ENCODE measurements at regions of chr11 and their contacts with region 1.

Region 1: DNA sequence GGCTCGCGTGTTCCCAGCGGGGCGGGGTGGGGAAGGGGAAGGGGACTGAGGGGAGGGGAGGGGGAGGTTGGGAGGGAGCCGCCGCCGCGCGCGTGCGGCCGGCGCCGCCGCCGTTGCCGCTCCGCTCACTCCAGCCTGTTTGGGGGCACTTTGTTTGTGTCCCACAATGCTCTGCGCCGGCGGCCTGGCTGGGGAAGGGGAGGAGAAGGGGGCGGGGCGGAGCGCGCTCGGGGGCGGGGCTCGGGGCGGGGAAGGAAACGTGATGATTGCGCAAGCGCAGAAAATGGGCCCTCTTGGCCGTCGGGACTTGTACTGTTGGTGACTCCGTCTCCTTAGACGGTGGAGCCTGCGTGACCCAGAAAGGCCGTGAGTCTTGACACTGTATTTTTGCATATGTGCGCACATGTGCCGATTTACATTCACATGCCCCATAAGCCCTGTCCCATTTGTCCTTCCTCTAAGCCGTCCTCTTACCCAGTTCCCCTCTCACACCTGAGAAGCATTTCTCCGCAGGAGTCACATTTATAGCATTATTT is at the start of gene ZBTB44:
- DNase-seq: peak; percentile 76
- ATAC-seq: peak; percentile 78
- H3K4me3 Mint-ChIP-seq: peak within 1 kb of the TSS; percentile 89
- H3K27ac Mint-ChIP-seq: peak within 1 kb of the TSS; percentile 95
- H3K4me1 Mint-ChIP-seq: peaks cover 36% of the 10 kb centered on the region
- H3K27me3 Mint-ChIP-seq: no peaks in the 10 kb centered on the region
- CTCF ChIP-seq: no peak
- total RNA-seq, gene ZBTB44: 49.0 and 61.5 TPM in 2 replicates

Region 2: GRCh38 chr11:129895126-129896041 is 419.4 kb before region 1 on chr11 and contains the start of gene NFRKB:
- CTCF ChIA-PET with region 1: no interaction called
- POLR2A ChIA-PET with region 1: no interaction called
- intact Hi-C with region 1: loop called (anchors 1 kb)
- DNase-seq: peak; percentile 92
- ATAC-seq: peak; percentile 97
- H3K4me3 Mint-ChIP-seq: peak within 1 kb of the TSS; percentile 88
- H3K27ac Mint-ChIP-seq: peak within 1 kb of the TSS; percentile 70
- H3K4me1 Mint-ChIP-seq: peaks cover 19% of the 10 kb centered on the region
- H3K27me3 Mint-ChIP-seq: no peaks in the 10 kb centered on the region
- CTCF ChIP-seq: no peak
- total RNA-seq, gene NFRKB: 27.2 and 28.9 TPM in 2 replicates

Region 3: DNA sequence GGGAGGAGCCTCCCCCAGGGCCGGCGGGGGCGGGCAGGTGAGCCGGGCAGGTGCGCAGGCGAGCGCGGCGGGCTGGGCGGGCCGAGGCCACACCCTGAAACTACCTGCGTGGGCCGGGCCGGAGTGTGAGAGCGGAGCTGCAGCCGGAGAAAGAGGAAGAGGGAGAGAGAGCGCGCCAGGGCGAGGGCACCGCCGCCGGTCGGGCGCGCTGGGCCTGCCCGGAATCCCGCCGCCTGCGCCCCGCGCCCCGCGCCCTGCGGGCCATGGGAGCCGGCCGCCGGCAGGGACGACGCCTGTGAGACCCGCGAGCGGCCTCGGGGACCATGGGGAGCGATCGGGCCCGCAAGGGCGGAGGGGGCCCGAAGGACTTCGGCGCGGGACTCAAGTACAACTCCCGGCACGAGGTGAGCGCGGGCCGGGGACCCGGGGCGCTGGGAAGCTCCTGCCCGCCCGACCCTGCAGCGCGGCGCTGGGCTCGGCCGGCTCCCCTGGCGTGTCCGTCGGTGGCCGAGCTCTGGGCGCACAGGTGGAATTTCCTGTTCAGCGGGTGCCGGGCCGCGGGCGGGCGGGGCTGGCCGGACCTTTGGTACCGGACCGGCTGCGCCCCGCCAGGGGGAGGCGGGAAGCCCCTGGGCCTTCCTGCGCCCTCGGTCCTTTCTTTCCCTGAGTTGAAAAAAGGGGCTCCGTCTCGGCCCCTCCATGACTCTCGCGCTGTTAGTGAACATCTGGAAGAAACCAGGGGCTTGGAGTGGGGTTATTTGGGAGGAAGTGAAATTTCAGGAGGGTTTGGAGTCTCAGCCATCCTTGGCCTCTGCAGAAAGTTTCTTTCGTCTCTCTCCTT is 154.9 kb before region 1 on chr11 and contains the start of gene ST14:
- CTCF ChIA-PET with region 1: no interaction called
- POLR2A ChIA-PET with region 1: no interaction called
- intact Hi-C with region 1: loop called (anchors 2 kb)
- DNase-seq: peak; percentile 54
- ATAC-seq: peak; percentile 77
- H3K4me3 Mint-ChIP-seq: peak within 1 kb of the TSS; percentile 89
- H3K27ac Mint-ChIP-seq: peak within 1 kb of the TSS; percentile 81
- H3K4me1 Mint-ChIP-seq: peaks cover 51% of the 10 kb centered on the region
- H3K27me3 Mint-ChIP-seq: no peaks in the 10 kb centered on the region
- CTCF ChIP-seq: no peak
- total RNA-seq, gene ST14: 22.6 and 23.9 TPM in 2 replicates

Region 4: DNA sequence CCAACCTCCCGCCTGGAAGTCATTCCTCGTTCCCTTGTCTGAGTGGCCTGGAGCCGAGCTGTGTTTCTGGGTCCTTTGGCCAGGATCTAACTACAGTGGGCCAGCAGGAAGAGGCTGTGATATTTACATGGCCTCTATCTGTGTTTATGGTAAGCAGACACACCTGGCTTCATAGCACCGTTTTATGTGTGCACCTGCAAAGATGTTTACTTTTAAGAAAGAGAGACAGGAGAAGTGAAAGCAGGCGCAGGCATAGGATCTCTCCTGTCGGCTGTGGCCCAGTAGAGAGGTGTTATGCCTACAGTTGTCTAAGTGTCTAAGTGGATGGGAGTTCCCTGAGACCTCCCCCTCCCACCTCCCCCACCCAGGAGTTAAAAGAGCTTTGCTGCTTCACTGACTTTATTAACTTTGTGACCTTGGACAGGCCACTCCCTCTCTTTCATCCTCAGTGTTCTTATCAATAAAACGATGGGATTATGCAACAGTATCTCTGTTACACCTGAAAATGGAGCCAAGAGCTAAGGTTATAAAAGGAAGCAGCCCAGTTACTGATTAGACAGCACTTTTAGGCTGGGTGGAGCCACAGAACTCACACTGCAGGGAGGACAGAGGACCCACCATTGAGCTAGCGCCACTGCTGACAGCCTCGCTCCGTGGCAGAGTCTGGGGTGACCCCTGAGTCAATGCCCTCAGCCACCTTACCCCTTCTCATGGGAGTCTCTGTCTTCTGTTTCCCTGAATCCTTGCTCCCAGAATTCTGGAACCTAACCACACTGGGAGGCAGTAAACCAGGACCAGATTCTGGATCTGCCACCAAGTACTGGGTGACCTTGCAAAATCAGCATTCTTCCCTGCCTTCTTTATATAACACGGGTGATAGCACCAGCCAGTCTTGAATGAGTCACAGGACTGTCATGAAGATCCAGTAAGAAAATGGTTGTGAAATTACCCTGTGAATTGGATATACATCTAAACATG is 133.2 kb before region 1 on chr11:
- CTCF ChIA-PET with region 1: no interaction called
- POLR2A ChIA-PET with region 1: no interaction called
- intact Hi-C with region 1: no loop called
- DNase-seq: no peak
- ATAC-seq: peak; percentile 61
- H3K4me3 Mint-ChIP-seq: peak overlapping the region; percentile 21
- H3K27ac Mint-ChIP-seq: peak overlapping the region; percentile 75
- H3K4me1 Mint-ChIP-seq: peaks cover 52% of the 10 kb centered on the region
- H3K27me3 Mint-ChIP-seq: no peaks in the 10 kb centered on the region
- CTCF ChIP-seq: no peak

Region 5: GRCh38 chr11:130234315-130234714 is 80.5 kb before region 1 on chr11:
- CTCF ChIA-PET with region 1: no interaction called
- POLR2A ChIA-PET with region 1: no interaction called
- intact Hi-C with region 1: loop called (anchors 5 kb)
- DNase-seq: no peak
- ATAC-seq: no peak
- H3K4me3 Mint-ChIP-seq: no peak overlapping the region
- H3K27ac Mint-ChIP-seq: peak overlapping the region; percentile 64
- H3K4me1 Mint-ChIP-seq: peaks cover 12% of the 10 kb centered on the region
- H3K27me3 Mint-ChIP-seq: no peaks in the 10 kb centered on the region
- CTCF ChIP-seq: no peak

Region 6: GRCh38 chr11:130330101-130330684 is 15.4 kb after region 1 on chr11:
- CTCF ChIA-PET with region 1: no interaction called
- POLR2A ChIA-PET with region 1: no interaction called
- intact Hi-C with region 1: no loop called
- DNase-seq: no peak
- ATAC-seq: no peak
- H3K4me3 Mint-ChIP-seq: no peak overlapping the region
- H3K27ac Mint-ChIP-seq: no peak overlapping the region
- H3K4me1 Mint-ChIP-seq: no peaks in the 10 kb centered on the region
- H3K27me3 Mint-ChIP-seq: no peaks in the 10 kb centered on the region
- CTCF ChIP-seq: no peak

Region 7: GRCh38 chr11:130340671-130341319 is 26.0 kb after region 1 on chr11:
- CTCF ChIA-PET with region 1: no interaction called
- POLR2A ChIA-PET with region 1: no interaction called
- intact Hi-C with region 1: no loop called
- DNase-seq: no peak
- ATAC-seq: no peak
- H3K4me3 Mint-ChIP-seq: no peak overlapping the region
- H3K27ac Mint-ChIP-seq: no peak overlapping the region
- H3K4me1 Mint-ChIP-seq: no peaks in the 10 kb centered on the region
- H3K27me3 Mint-ChIP-seq: no peaks in the 10 kb centered on the region
- CTCF ChIP-seq: no peak

Region 8: DNA sequence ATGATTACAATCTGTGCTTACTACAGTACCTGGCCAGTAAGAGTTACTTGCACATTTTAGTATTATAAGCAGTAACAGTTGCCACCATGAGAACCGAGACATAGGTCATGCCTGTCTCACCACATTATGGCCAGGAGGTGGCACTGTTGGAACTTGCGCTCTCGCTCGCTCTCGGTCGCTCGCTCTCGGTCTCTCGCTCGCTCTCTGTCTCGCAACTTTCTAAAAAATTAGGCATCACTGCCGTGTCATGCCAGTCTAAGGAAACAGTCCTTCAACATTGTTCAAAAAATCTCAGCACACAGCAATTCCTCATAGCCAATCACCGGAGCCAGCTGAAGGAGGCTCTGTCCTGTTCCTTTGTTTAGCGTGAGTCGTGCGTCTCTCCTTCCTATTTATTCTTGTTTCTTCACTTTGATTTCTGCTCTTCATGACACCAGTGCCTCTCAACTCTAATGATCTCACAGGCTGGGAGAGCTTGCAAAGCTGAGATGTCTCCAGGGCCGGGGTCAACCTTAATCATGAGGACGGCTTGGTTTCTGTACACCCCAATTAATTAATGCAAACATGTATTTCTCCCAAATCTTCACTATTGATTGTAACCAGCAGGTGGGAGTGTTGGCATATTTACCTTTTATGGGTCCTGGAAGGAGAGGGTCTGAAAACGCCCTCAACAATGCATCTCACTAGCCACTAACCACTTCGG is 119.9 kb after region 1 on chr11:
- CTCF ChIA-PET with region 1: no interaction called
- POLR2A ChIA-PET with region 1: no interaction called
- intact Hi-C with region 1: loop called (anchors 2 kb)
- DNase-seq: peak; percentile 39
- ATAC-seq: peak; percentile 84
- H3K4me3 Mint-ChIP-seq: no peak overlapping the region
- H3K27ac Mint-ChIP-seq: no peak overlapping the region
- H3K4me1 Mint-ChIP-seq: peaks cover 8% of the 10 kb centered on the region
- H3K27me3 Mint-ChIP-seq: peaks cover 32% of the 10 kb centered on the region
- CTCF ChIP-seq: peak; percentile 87

Region 9: DNA sequence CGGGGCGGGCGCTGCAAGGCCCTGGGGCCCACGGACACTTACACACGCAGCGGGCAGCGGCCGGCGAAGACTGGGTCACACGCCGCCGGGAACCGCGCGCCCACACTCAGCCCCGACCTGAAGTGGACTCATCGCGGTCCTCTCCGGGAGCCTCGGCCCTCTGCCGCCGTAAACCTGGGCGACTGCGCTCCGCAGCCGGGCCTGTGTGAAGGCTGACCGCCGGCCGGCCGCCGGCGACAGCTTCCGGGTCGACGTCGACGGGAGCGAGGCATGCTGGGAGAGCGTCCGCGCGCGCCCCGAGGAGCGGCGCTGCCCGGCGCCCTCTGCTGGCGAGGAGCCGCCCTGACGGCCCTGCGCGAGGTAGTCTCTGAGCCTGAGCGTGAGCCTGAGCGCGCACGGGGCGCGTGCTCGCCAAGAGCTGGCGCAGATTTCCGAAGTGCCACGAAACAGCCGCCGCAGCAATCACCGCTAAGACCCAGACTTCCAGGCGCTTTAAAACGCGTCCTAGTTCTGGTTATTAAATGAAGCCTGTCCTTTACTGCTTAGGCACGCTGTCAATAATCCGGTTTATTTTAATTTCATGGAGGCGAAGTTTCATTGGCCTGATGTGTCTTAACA is 601.5 kb after region 1 on chr11 and contains the start of gene SNX19:
- CTCF ChIA-PET with region 1: no interaction called
- POLR2A ChIA-PET with region 1: no interaction called
- intact Hi-C with region 1: loop called (anchors 1 kb)
- DNase-seq: peak; percentile 94
- ATAC-seq: peak; percentile 99
- H3K4me3 Mint-ChIP-seq: peak within 1 kb of the TSS; percentile 86
- H3K27ac Mint-ChIP-seq: peak within 1 kb of the TSS; percentile 87
- H3K4me1 Mint-ChIP-seq: peaks cover 37% of the 10 kb centered on the region
- H3K27me3 Mint-ChIP-seq: peaks cover 18% of the 10 kb centered on the region
- CTCF ChIP-seq: peak; percentile 84
- total RNA-seq, gene SNX19: 53.7 and 60.4 TPM in 2 replicates

Measured in activated B cell treated with CpG ODN at 0.5 μM for 24 hours (primary cell).